Panc1 (cell line): ENCODE measurements at regions of chr3 and their contacts with region 1.

Region 1: DNA sequence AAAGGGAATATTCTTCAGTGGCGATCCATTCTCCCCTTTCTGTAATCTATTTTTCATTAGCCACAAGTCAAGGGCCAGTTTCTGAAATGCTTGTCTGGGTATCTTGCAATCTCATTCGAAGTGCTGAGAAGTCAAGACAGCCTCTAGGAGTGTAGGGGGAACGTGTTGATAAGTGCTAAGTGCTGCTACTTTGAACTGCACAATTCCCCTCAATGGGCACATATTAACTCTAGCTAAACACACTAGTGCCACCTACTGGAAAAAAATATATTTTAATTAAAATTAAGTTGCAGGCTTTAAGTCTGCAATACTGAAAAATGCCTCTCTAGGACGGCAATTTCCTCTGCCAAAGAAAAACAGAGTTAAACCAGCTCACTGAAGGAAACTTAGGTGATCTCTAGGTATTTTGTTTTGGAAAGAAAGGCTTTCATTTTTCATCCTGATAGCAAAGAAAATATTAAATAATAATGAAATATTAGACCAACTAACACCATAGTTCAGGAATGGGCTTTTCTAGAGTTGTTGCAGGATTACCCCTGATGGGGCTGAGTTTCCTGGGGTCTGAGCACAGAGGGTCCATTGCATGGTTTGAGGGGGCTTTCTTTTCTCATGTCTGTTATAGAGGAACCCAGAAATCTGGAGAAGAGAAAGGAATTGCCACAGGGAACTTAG is 181.9 kb upstream of the KBTBD8 start:
- DNase-seq: no peak
- ATAC-seq: peak; percentile 68; the same call in 1 of the 2 replicates
- H3K4me3 ChIP-seq: no peak overlapping the region
- H3K27ac ChIP-seq: no peak overlapping the region
- H3K4me1 ChIP-seq: no peaks in the 10 kb centered on the region
- H3K27me3 ChIP-seq: no peaks in the 10 kb centered on the region
- CTCF ChIP-seq: peak; percentile 62

Region 2: DNA sequence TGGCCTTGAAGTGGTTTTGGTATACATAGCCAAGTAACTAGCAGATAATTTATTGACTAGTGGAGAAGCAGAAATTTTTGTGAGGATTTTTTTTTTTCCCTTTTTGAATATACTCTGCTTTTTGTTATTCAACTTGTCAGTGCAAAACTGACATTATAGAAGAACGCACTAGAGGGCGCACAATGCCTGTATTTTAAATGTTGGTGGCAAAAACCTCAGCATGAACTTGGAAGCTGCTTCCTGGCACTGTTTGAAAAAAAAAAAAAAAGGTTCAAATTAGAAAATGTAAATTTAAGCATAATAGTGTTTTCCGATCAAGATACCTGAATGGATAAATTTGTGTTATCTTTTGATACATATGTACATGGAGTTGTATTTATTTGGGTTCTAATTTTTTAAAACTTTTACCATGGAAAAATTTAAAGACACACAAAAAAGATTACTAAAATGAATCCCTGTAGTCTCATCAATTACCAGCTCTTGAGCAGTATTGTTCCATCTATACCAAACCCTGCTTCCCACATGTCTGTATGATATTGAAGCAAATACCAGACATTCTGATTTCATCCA is 539.4 kb before region 1 on chr3:
- CTCF ChIA-PET with region 1: interaction called, 5 read pairs
- POLR2A ChIA-PET with region 1: no interaction called
- in situ Hi-C with region 1: no loop called
- intact Hi-C with region 1: loop called (anchors 2 kb)
- DNase-seq: peak; percentile 32
- ATAC-seq: no peak
- H3K4me3 ChIP-seq: no peak overlapping the region
- H3K27ac ChIP-seq: no peak overlapping the region
- H3K4me1 ChIP-seq: no peaks in the 10 kb centered on the region
- H3K27me3 ChIP-seq: no peaks in the 10 kb centered on the region
- CTCF ChIP-seq: peak; percentile 61; the same call in 1 of the 2 replicates

Region 3: GRCh38 chr3:66407611-66408218 is 408.5 kb before region 1 on chr3:
- CTCF ChIA-PET with region 1: interaction called, 3 read pairs
- POLR2A ChIA-PET with region 1: no interaction called
- in situ Hi-C with region 1: no loop called
- intact Hi-C with region 1: loop called (anchors 5 kb)
- DNase-seq: peak; percentile 24
- ATAC-seq: peak; percentile 89
- H3K4me3 ChIP-seq: no peak overlapping the region
- H3K27ac ChIP-seq: no peak overlapping the region
- H3K4me1 ChIP-seq: no peaks in the 10 kb centered on the region
- H3K27me3 ChIP-seq: no peaks in the 10 kb centered on the region
- CTCF ChIP-seq: peak; percentile 85

Region 4: DNA sequence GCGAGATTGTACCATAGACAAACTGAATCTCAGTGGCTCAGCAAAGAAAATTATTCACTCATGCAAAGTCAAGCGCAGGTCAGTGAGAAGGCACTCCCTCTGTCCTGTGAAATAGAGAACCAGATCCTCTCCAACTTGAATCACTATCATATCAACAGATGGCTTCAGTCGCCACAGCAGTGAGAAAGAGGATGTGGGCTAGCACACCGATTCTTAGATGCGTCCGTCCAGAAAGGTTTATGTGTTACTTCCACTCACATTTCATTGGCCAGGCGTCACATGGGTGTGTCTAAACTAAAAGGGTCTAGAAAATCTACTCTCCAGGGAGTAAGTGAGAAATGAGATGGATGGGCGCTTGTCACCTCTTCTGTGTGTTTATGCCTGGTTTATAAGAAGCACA is 40.3 kb after region 1 on chr3:
- CTCF ChIA-PET with region 1: no interaction called
- POLR2A ChIA-PET with region 1: no interaction called
- in situ Hi-C with region 1: no loop called
- intact Hi-C with region 1: no loop called
- DNase-seq: no peak
- ATAC-seq: no peak
- H3K4me3 ChIP-seq: no peak overlapping the region
- H3K27ac ChIP-seq: no peak overlapping the region
- H3K4me1 ChIP-seq: no peaks in the 10 kb centered on the region
- H3K27me3 ChIP-seq: no peaks in the 10 kb centered on the region
- CTCF ChIP-seq: no peak

Region 5: DNA sequence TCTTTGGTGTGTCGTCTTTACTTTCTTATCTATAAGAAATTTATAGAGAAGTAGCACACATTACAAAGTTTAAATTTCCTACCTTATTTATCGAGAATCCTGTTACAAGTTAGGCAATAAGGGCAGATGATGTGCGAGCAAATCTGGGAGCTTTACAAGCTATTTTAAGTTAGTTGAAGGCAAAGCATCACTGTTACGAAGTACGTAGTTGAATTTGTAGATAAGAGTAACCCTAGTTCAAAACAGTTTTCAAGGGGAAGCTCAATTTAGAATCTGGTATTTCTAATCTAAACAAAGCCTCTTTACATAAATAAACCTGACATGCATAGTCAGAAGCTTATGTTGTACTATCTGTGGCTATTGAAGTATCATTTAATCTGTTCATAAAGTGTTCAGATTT is 190.2 kb after region 1 on chr3:
- CTCF ChIA-PET with region 1: no interaction called
- POLR2A ChIA-PET with region 1: no interaction called
- in situ Hi-C with region 1: no loop called
- intact Hi-C with region 1: no loop called
- DNase-seq: no peak
- ATAC-seq: no peak
- H3K4me3 ChIP-seq: no peak overlapping the region
- H3K27ac ChIP-seq: no peak overlapping the region
- H3K4me1 ChIP-seq: no peaks in the 10 kb centered on the region
- H3K27me3 ChIP-seq: no peaks in the 10 kb centered on the region
- CTCF ChIP-seq: no peak